Transverse colon (tissue), 4 donors: ENCODE measurements at regions of chr12 and their contacts with region 1.

Region 1: DNA sequence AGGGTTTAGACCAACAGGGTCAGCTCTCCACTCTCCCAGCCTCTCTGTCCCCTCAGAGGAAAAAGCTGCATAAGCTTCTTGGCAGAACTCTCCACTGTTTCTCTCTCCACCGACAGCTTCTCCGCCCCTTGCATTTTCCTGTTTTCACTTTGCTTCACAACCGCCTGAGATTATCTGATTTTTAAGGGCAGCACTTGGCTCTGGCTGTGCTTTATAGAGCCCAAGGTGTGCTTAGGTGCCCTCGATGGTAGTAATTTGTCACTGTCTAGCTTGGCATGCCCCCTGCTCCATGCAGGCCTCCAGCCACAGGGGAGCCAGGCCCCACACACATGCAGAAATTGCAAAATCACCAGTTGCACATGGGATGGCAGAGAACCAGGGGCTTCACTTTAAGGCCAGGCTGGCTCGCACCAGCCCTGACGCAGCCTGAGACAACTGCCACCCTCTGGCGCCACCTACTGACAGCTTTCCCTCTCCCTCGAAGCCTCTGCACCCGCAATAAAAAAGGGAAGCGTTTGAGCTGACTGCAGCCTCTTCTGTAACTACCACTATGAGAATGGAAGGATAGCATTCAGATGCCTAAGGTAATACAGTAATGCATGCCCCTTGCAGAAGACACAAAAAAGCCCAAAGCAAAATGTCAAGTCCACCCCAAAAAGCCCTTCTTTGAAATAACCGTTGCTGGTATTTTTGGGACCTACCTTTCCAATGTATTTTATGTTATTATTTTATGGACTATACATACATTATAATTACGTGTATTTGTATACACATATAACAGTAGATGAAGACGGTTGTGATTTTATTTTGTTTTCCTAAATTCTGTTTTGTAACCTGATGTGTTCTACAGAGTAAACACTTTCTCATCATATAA is 32.0 kb upstream of the RIMBP2 start:
- DNase-seq: peak; percentile 79
- H3K4me3 ChIP-seq: no peak overlapping the region
- H3K27ac ChIP-seq: no peak overlapping the region
- H3K4me1 ChIP-seq: no peaks in the 10 kb centered on the region
- H3K27me3 ChIP-seq: peaks cover 4% of the 10 kb centered on the region
- CTCF ChIP-seq: peak; percentile 68 to 82 (median 80)
- EP300 ChIP-seq: no peak
- POLR2A ChIP-seq: no peak

Region 2: DNA sequence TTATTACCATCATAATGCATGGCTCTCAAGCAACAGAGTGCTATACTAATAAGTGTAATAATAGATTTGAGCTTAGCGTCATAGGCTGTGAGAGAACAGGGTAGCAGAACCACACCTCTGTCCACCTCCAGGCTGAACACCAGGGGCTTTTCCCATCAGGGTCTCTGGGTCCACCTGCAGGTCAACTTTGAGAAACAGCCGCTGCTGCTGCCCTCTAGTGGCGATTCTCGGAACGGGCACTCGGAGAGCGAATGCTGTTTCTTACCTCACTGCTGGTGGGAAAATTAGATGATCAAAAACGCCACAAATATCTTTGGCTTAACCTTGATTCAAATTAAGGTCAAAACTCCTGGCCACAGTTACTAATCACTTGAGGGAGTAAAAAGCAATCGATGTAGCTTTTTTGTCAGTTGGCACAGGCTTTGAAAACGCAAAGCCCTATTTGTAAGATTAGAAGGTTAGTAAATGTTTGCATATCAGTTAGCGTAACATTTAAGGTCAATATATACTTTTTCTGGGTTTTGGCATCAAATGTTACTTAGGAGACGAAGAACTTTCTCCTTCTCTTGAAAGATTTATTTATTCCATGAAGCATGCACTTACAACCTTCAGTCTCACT is 716.4 kb before region 1 on chr12:
- in situ Hi-C with region 1: loop called in 1 of 4 experiments (anchors 25 kb)
- intact Hi-C with region 1: no loop called
- DNase-seq: peak; percentile 48
- H3K4me3 ChIP-seq: no peak overlapping the region
- H3K27ac ChIP-seq: no peak overlapping the region
- H3K4me1 ChIP-seq: no peaks in the 10 kb centered on the region
- H3K27me3 ChIP-seq: peaks cover 16% of the 10 kb centered on the region
- CTCF ChIP-seq: peak; percentile 49 to 84 (median 68)
- EP300 ChIP-seq: no peak
- POLR2A ChIP-seq: no peak

Region 3: DNA sequence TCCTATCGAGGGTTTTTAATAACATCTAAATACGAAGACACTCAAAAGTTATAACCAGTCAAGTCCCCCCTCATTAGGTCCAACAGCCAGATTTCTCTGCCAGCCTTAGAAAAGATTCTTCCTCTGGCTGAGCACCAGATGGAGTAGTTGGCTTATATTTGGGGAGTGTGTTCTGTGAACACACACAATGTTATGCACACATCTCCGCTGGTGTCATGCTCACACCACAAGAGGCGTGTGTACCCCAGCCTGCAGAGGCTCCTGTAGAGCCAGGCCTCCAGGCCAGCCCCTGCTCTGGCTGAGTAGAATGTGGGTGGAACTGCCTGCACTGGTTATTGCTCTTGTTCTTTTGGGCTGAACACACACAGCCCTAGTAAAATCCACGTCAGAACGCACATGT is 346.4 kb before region 1 on chr12:
- in situ Hi-C with region 1: loop called in 1 of 4 experiments (anchors 10 kb)
- intact Hi-C with region 1: no loop called
- DNase-seq: no peak
- H3K4me3 ChIP-seq: no peak overlapping the region
- H3K27ac ChIP-seq: no peak overlapping the region
- H3K4me1 ChIP-seq: no peaks in the 10 kb centered on the region
- H3K27me3 ChIP-seq: no peaks in the 10 kb centered on the region
- CTCF ChIP-seq: peak in 3 of 5 experiments; percentile 13 to 43 (median 25)
- EP300 ChIP-seq: no peak
- POLR2A ChIP-seq: no peak